Breast epithelium (tissue), 4 donors: ENCODE measurements at regions of chr22 and their contacts with region 1.

Region 1: DNA sequence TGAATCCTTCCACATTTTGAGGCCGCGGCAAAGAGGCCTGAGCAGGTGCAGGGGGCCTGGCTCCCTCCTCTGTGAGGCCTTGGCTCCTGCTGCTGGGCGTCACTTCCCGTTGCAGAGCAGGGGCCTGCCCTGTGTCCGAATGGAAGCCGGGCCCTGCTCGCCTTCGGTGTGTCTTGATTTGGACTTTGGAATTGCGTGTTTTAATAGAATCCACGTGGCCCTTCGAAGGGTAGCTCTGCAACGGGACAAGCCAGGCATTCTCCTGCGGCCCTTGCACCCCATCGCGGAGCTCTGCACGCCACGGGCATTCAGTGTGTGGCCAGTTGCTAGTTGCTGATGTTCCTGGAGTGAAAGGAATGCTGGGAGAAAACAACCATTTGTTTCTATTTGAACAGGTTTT is 25.8 kb downstream of the SAMM50 start:
- DNase-seq: no peak
- H3K4me3 ChIP-seq: no peak overlapping the region
- H3K27ac ChIP-seq: no peak overlapping the region
- H3K4me1 ChIP-seq: no peaks in the 10 kb centered on the region
- H3K27me3 ChIP-seq: no peaks in the 10 kb centered on the region
- CTCF ChIP-seq: no peak
- POLR2A ChIP-seq: no peak

Region 2: GRCh38 chr22:44898236-44898635 is 917.2 kb after region 1 on chr22:
- intact Hi-C with region 1: loop called (anchors 5 kb)
- DNase-seq: peak in 1 of 2 donors; percentile 24
- H3K4me3 ChIP-seq: no peak overlapping the region
- H3K27ac ChIP-seq: no peak overlapping the region
- H3K4me1 ChIP-seq: no peaks in the 10 kb centered on the region
- H3K27me3 ChIP-seq: no peaks in the 10 kb centered on the region
- CTCF ChIP-seq: no peak
- POLR2A ChIP-seq: no peak